ENCODE measurements at regions of chr3 and their contacts with region 1.

Region 1: DNA sequence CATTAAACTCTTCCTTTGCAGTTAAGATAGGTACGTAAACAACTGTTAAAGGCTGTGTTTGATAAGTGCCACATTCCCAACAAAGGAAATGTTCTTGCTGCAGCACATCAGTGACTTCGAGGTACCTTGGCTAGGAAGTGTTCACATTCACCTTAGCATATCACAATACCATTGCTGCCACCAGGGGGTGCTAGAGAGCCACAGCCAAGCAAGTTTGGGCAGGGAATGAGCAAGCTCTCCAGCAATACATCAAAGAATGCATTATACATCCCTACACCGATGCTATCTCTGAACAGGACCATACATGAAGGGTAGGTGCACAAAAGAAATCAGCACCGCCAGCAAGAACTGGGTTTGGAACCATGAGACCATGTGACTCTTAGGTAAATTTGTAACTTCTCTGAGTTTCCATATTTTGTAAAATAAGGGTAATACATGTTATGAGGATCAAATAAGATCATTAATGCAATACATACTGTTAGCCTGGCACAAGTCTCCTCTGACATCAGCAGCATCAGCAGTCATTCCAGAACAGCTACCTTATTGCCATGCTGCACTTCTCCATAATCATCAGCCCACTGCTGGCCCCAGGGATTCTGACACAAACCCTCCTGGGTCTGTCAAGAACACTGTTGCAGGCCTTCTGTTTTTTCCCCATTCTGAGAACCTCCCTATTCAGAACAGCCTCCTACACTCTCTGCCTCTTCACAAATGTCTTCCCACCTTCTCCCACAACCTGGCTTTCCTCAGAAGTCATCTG is 37.6 kb downstream of the RYK start:
- DNase-seq: peak; percentile 48 to 90 (median 80)
- ATAC-seq: peak; percentile 82 to 92 (median 87)
- H3K4me3 ChIP-seq: no peak overlapping the region
- H3K4me3 Mint-ChIP-seq: no peak overlapping the region
- H3K27ac ChIP-seq: no peak overlapping the region
- H3K27ac Mint-ChIP-seq: peak overlapping the region; percentile 1 to 25
- H3K4me1 ChIP-seq: no peaks in the 10 kb centered on the region
- H3K4me1 Mint-ChIP-seq: peaks cover 21 to 27% (median 27%) of the 10 kb centered on the region in 3 donors
- H3K27me3 ChIP-seq: no peaks in the 10 kb centered on the region
- H3K27me3 Mint-ChIP-seq: no peaks in the 10 kb centered on the region

Region 2: DNA sequence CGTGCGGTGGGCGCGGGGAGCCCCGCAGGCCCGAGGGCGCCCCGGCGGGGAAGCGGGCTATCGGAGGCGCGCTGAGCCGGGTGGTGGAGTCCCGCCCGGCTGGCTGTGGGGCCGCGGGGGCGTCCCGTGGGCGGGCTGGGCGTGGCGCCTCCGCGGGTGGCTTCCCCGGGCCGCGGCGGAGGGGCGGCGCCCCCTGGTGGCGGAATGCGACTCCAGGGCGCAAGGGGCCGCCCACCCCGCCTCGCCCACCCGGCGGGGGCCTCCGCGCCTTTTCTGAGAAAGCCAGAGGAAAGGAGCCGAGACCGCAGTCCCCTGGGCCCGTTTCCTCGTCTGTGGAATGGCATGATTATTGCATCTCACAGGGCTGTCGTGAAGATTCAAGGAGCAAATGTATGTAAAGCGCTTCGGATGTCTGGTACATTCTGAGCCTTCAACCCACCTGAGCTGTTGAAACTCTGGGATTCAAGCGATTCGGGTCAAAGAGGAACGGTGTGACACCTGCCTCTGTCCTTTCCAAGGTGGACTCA is 285.5 kb before region 1 on chr3:
- CTCF ChIA-PET with region 1: no interaction called
- POLR2A ChIA-PET with region 1: no interaction called
- DNase-seq: peak; percentile 36 to 89 (median 70)
- ATAC-seq: peak; percentile 92 to 98 (median 94)
- H3K4me3 ChIP-seq: peak overlapping the region; percentile 44 to 72
- H3K4me3 Mint-ChIP-seq: peak overlapping the region; percentile 63 to 70 (median 66)
- H3K27ac ChIP-seq: no peak overlapping the region
- H3K27ac Mint-ChIP-seq: no peak overlapping the region
- H3K4me1 ChIP-seq: peaks cover 5 to 15% of the 10 kb centered on the region in 2 experiments
- H3K4me1 Mint-ChIP-seq: peaks cover 5 to 8% (median 6%) of the 10 kb centered on the region in 3 donors
- H3K27me3 ChIP-seq: peaks cover 0 to 24% of the 10 kb centered on the region in 2 experiments
- H3K27me3 Mint-ChIP-seq: peaks cover 12% of the 10 kb centered on the region in 2 donors

Region 3: DNA sequence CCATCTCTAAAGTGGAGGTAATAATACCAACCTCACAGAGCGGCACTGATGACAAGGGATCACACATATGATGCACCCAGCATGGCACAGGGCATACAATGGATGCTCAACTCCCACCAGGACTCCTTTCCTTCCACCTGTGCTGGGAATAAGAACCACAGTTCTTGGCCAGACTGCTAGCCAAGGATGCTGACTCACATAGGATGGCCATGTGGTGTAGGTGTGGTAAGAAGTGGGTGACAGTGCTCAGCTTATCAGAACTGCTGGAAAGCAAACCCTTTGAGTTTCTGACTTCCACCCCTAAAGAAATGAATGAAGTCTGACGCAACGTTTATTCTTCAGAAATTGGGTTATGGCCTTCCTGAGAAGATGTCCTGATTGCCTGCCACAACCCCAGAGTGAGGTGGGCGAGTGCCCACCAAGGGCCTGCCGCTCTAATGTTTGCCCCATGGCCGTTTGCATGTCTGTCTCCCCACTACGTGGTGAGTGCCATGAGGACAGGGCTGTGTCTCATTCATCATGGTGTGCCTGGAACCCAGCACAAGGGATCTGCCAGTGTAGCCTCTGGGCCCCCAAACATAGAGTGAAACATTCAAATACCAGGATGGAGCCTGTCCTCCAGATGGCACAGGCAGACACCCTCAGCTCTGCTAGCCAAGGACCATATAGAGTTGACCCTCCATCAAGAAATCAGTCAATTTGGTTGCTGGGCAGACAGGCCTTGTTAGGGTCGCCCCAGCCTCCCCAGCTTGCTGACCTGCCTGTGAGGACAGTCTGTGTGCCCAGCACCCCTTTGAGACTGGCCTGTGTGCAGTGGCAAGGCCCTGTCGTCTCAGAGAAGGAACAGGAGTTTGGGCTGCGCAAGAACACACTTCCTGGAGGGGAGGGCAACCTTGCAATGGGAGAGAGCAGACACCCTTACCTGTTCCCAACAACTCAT is 125.8 kb before region 1 on chr3:
- CTCF ChIA-PET with region 1: no interaction called
- POLR2A ChIA-PET with region 1: no interaction called
- DNase-seq: no peak
- ATAC-seq: no peak
- H3K4me3 ChIP-seq: no peak overlapping the region
- H3K4me3 Mint-ChIP-seq: no peak overlapping the region
- H3K27ac ChIP-seq: no peak overlapping the region
- H3K27ac Mint-ChIP-seq: no peak overlapping the region
- H3K4me1 ChIP-seq: no peaks in the 10 kb centered on the region
- H3K4me1 Mint-ChIP-seq: no peaks in the 10 kb centered on the region
- H3K27me3 ChIP-seq: peaks cover 0 to 8% of the 10 kb centered on the region in 2 experiments
- H3K27me3 Mint-ChIP-seq: peaks cover 3 to 4% of the 10 kb centered on the region in 2 donors

Region 4: DNA sequence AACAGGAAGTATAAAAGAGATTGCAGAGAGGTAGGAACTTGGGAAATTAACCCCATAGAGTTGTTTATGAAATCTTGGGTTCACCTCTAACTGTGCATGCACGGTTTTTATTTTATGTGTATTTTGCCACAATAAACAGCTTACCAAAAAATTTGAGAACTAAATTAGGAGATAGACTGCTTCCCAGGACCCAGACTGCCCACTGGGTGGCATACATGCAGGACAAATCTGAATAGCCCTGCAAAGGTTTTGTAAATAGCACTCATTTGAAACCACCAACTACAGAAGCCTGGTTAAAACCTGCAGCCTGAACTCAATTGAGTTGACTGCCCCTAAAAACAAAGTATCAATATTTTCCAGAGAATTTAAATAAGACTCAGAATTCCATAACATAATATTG is 86.9 kb before region 1 on chr3:
- CTCF ChIA-PET with region 1: no interaction called
- POLR2A ChIA-PET with region 1: no interaction called
- DNase-seq: no peak
- ATAC-seq: no peak
- H3K4me3 ChIP-seq: no peak overlapping the region
- H3K4me3 Mint-ChIP-seq: no peak overlapping the region
- H3K27ac ChIP-seq: no peak overlapping the region
- H3K27ac Mint-ChIP-seq: no peak overlapping the region
- H3K4me1 ChIP-seq: no peaks in the 10 kb centered on the region
- H3K4me1 Mint-ChIP-seq: no peaks in the 10 kb centered on the region
- H3K27me3 ChIP-seq: peaks cover 0 to 10% of the 10 kb centered on the region in 2 experiments
- H3K27me3 Mint-ChIP-seq: peaks cover 5% of the 10 kb centered on the region in 2 donors

Region 5: GRCh38 chr3:134197681-134198261 is 15.3 kb before region 1 on chr3:
- CTCF ChIA-PET with region 1: interaction called, 5 to 20 read pairs
- POLR2A ChIA-PET with region 1: no interaction called
- DNase-seq: peak in 2 of 35 experiments; percentile 14 to 63
- ATAC-seq: peak; percentile 60 to 72 (median 67)
- H3K4me3 ChIP-seq: no peak overlapping the region
- H3K4me3 Mint-ChIP-seq: no peak overlapping the region
- H3K27ac ChIP-seq: no peak overlapping the region
- H3K27ac Mint-ChIP-seq: no peak overlapping the region
- H3K4me1 ChIP-seq: no peaks in the 10 kb centered on the region
- H3K4me1 Mint-ChIP-seq: peaks cover 0 to 3% (median 0%) of the 10 kb centered on the region in 3 donors
- H3K27me3 ChIP-seq: no peaks in the 10 kb centered on the region
- H3K27me3 Mint-ChIP-seq: no peaks in the 10 kb centered on the region

Region 6: DNA sequence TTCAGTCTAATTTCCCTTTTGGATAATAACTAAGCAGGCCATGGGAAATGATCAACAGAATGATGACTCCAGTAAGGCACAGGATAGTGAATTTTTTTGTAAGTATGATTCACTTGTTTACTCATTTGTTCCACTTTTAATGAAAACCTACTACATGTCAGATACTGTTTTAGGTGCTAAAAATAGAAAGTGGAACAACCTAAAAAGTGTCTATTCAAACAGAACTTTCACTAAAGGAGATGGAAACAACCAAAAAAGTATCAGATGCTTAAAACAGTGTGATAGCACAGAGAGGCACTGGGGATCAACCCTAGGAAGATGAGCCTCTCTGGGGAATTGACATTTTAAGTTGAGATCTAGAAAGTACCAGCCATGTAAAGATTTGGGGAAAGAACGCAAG is 26.5 kb after region 1 on chr3:
- CTCF ChIA-PET with region 1: interaction called in 1 of 2 experiments, 21 read pairs
- POLR2A ChIA-PET with region 1: interaction called in 1 of 2 experiments, 8 read pairs
- DNase-seq: no peak
- ATAC-seq: no peak
- H3K4me3 ChIP-seq: no peak overlapping the region
- H3K4me3 Mint-ChIP-seq: no peak overlapping the region
- H3K27ac ChIP-seq: no peak overlapping the region
- H3K27ac Mint-ChIP-seq: peak overlapping the region in 1 of 2 donors; percentile 32
- H3K4me1 ChIP-seq: peaks cover 3 to 10% of the 10 kb centered on the region in 2 experiments
- H3K4me1 Mint-ChIP-seq: peaks cover 83 to 85% (median 84%) of the 10 kb centered on the region in 3 donors
- H3K27me3 ChIP-seq: no peaks in the 10 kb centered on the region
- H3K27me3 Mint-ChIP-seq: no peaks in the 10 kb centered on the region

Measured in T-cell (primary cell).